ENCODE measurements at regions of chr21 and their contacts with region 1.

Region 1: GRCh38 chr21:44933611-44934191 is 6.1 kb upstream of the SLX9 start:
- DNase-seq: no peak
- ATAC-seq: no peak
- H3K4me3 ChIP-seq: no peak overlapping the region
- H3K4me3 Mint-ChIP-seq: peak overlapping the region; percentile 15
- H3K27ac ChIP-seq: no peak overlapping the region
- H3K27ac Mint-ChIP-seq: no peak overlapping the region
- H3K4me1 ChIP-seq: peaks cover 34% of the 10 kb centered on the region
- H3K4me1 Mint-ChIP-seq: peaks cover 28% of the 10 kb centered on the region
- H3K27me3 ChIP-seq: no peaks in the 10 kb centered on the region
- H3K27me3 Mint-ChIP-seq: no peaks in the 10 kb centered on the region
- CTCF ChIP-seq: no peak

Region 2: DNA sequence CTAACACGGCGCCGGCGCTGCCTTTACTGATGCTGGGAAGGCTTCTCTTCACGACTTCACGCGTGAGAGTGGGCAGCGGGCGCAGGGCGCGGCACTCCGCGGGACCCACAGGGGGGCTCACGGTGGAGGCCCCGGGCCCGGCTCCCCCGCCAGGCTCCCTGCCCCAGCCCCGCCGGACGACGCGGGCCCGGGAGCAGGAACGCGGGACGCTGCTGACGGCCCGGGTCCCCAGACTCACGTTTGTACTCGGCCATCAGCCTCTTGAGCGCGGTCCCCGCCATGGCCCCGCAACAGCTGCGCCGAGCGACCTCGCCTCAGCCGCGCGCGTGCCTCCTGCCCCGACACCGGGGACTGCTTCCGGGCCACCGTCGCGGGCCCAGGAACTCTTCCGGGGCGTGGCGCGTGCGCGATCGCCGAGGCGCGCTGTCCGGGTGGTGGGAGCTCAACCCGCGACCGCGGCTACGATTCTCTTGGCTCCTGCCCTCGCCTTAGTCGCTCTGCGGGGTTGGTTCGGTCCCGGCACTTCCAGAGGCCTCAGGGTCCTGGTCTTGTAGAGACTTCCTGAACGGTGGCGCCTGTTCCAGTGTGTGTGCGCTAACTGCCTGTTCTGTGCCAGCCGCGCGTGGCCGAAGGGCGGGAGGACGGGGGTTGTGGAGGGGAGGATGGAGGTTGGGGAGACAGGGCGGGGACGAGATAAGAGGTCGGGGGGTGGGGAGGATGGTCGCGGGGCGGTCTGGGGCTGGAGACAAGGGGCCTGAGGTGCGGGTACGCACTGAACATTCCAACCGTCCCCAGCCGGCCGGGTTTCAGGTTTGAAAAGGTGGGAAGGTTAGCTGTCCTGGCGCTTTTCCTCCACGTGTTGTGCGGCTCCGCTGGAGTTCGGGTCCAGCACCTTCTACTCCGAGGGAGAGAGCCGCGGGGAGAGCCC is 132.0 kb before region 1 on chr21 and contains the start of gene UBE2G2:
- CTCF ChIA-PET with region 1: interaction called, 31 read pairs
- POLR2A ChIA-PET with region 1: interaction called, 11 read pairs
- intact Hi-C with region 1: loop called in 1 of 2 experiments (anchors 1 kb)
- DNase-seq: peak; percentile 70 to 91 (median 85)
- ATAC-seq: peak; percentile 88
- H3K4me3 ChIP-seq: peak within 1 kb of the TSS; percentile 76 to 95
- H3K4me3 Mint-ChIP-seq: peak within 1 kb of the TSS; percentile 95
- H3K27ac ChIP-seq: peak within 1 kb of the TSS; percentile 64 to 71
- H3K27ac Mint-ChIP-seq: peak within 1 kb of the TSS; percentile 92
- H3K4me1 ChIP-seq: peaks cover 20% of the 10 kb centered on the region
- H3K4me1 Mint-ChIP-seq: peaks cover 47% of the 10 kb centered on the region
- H3K27me3 ChIP-seq: no peaks in the 10 kb centered on the region
- H3K27me3 Mint-ChIP-seq: no peaks in the 10 kb centered on the region
- CTCF ChIP-seq: peak; percentile 52
- total RNA-seq, gene UBE2G2: 88.8 to 89.1 TPM

Measured in CD8-positive, alpha-beta T cell (primary cell).